Motor neuron (in vitro differentiated cells): ENCODE measurements at regions of chr19 and their contacts with region 1.

Region 1: GRCh38 chr19:56080669-56081401 is 40.3 kb downstream of the ZNF787 start:
- ATAC-seq: peak; percentile 53 to 89 (median 64)
- H3K4me3 ChIP-seq: peak overlapping the region in 1 of 5 donors; percentile 22
- H3K27ac ChIP-seq: no peak overlapping the region
- H3K4me1 ChIP-seq: peaks cover 3% of the 10 kb centered on the region in 2 donors

Region 2: GRCh38 chr19:55795021-55795420 is 285.8 kb before region 1 on chr19:
- in situ Hi-C with region 1: no loop called
- ATAC-seq: no peak
- H3K4me3 ChIP-seq: no peak overlapping the region
- H3K27ac ChIP-seq: no peak overlapping the region
- H3K4me1 ChIP-seq: no peaks in the 10 kb centered on the region

Region 3: GRCh38 chr19:56162258-56162657 is 81.4 kb after region 1 on chr19:
- in situ Hi-C with region 1: loop called in 1 of 9 experiments (anchors 10 kb)
- ATAC-seq: no peak
- H3K4me3 ChIP-seq: no peak overlapping the region
- H3K27ac ChIP-seq: no peak overlapping the region
- H3K4me1 ChIP-seq: no peaks in the 10 kb centered on the region

Region 4: GRCh38 chr19:56314562-56315077 is 233.8 kb after region 1 on chr19 and contains the start of gene ZSCAN5A:
- in situ Hi-C with region 1: loop called in 1 of 9 experiments (anchors 25 kb)
- ATAC-seq: peak; percentile 73 to 87 (median 81)
- H3K4me3 ChIP-seq: peak within 1 kb of the TSS; percentile 55 to 94 (median 71)
- H3K27ac ChIP-seq: peak within 1 kb of the TSS; percentile 98
- H3K4me1 ChIP-seq: peaks cover 9 to 11% of the 10 kb centered on the region in 2 donors
- total RNA-seq, gene ZSCAN5A: 5.2 to 21.4 (median 7.0) TPM